OCI-LY7 (cell line): ENCODE measurements at regions of chr4 and their contacts with region 1.

Region 1: DNA sequence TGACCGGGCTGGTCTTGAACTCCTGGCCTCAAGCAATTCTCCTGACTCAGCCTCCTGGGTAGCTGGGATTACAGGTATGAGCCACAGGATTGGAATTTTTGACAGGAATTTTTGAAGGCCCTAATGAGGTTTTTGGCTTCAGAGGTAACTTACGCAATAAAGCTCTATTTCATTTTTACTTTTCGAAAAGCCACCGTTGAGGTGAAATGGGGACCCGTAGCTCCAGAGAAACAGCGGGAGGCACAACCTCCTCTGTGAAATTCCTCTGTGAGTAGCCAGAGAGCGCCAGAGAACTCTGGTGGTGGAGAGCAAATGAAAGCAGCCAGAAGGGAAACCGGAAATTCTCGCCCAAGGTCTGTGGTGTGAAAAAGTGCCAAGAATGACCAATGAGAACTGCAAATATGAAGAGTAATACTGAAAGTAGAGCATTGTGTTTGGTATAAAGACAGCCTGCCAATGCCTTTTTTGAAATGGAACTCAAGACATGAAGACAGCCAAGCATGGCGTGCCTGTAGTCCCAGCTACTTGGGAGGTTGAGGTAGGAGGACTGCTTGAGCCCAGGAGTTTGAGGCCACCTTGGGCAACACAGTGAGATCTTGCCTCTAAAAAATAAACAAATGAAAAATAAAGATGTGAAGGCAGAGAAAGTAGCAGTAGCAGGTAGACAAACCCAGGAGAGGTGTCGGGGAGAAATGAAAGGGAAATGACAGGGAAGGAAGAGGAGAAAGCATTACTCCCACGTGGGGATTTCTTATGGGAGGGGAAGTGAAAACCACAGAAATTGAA is 33.0 kb upstream of the TMEM131L start:
- DNase-seq: peak; percentile 94
- H3K4me3 ChIP-seq: peak overlapping the region; percentile 60
- H3K27ac ChIP-seq: peak overlapping the region; percentile 94
- H3K4me1 ChIP-seq: peaks cover 99% of the 10 kb centered on the region
- CTCF ChIP-seq: peak; percentile 96

Region 2: DNA sequence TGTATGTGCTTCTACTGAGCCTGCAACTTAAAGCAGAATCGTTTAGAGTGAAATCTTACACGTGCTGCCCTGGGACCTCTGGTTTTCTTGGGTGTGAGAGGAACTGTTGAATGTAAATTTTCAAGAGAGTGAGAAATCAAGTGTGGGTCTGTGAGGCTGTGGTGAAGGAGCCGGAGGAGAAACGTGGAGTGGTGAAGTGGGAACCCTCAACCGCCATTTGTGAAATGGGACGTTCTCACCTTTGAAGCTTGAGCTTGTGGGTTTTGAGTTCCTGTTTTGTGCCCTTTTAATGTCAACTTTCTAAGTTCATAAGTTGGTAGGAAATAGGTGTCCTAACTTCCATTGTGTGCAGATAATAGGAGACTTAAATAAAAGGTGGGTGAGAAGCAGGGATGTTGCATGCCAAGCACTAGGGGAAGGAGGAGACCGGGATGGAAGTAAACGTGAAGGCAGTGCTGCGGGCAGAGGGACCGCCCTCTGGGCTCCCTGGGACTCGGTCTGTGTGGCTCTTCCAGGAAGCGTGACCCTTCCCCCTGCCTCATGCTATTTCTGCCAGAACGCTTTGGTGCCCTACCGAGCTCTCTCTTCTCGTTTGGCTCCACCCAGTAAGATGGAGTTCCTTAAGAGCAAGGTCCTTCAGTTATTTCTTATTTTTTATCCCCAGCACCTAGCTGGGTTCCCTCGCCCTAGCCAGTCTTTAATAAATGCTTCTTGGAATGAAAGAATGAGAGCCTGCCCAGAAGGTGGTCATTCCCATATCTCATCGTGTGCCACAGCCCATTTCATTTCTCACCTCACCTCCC is 89.0 kb after region 1 on chr4:
- CTCF ChIA-PET with region 1: no interaction called
- POLR2A ChIA-PET with region 1: no interaction called
- intact Hi-C with region 1: loop called (anchors 5 kb)
- DNase-seq: peak; percentile 25
- H3K4me3 ChIP-seq: peak overlapping the region; percentile 22
- H3K27ac ChIP-seq: peak overlapping the region; percentile 62
- H3K4me1 ChIP-seq: peaks cover 82% of the 10 kb centered on the region
- CTCF ChIP-seq: no peak

Region 3: GRCh38 chr4:153573881-153574802 is 141.0 kb after region 1 on chr4:
- CTCF ChIA-PET with region 1: interaction called, 6 read pairs
- POLR2A ChIA-PET with region 1: interaction called, 9 read pairs
- intact Hi-C with region 1: loop called (anchors 1 kb)
- DNase-seq: peak; percentile 83
- H3K4me3 ChIP-seq: peak overlapping the region; percentile 42
- H3K27ac ChIP-seq: peak overlapping the region; percentile 85
- H3K4me1 ChIP-seq: peaks cover 92% of the 10 kb centered on the region
- CTCF ChIP-seq: peak; percentile 85